GM12878 (cell line): ENCODE measurements at regions of chr17 and their contacts with region 1.

Region 1: GRCh38 chr17:73215447-73215846 is 22.6 kb downstream of the COG1 start:
- DNase-seq: no peak
- ATAC-seq: peak; percentile 79
- H3K4me3 ChIP-seq: no peak overlapping the region
- H3K27ac ChIP-seq: no peak overlapping the region
- H3K4me1 ChIP-seq: peaks cover 4% of the 10 kb centered on the region; the same call in 1 of the 2 replicates
- H3K27me3 ChIP-seq: no peaks in the 10 kb centered on the region
- CTCF ChIP-seq: peak in 2 of 3 experiments; percentile 0 to 30; a peak in 1 of 6 replicates
- EP300 ChIP-seq: no peak
- POLR2A ChIP-seq: no peak
- RAD21 ChIP-seq: no peak

Region 2: DNA sequence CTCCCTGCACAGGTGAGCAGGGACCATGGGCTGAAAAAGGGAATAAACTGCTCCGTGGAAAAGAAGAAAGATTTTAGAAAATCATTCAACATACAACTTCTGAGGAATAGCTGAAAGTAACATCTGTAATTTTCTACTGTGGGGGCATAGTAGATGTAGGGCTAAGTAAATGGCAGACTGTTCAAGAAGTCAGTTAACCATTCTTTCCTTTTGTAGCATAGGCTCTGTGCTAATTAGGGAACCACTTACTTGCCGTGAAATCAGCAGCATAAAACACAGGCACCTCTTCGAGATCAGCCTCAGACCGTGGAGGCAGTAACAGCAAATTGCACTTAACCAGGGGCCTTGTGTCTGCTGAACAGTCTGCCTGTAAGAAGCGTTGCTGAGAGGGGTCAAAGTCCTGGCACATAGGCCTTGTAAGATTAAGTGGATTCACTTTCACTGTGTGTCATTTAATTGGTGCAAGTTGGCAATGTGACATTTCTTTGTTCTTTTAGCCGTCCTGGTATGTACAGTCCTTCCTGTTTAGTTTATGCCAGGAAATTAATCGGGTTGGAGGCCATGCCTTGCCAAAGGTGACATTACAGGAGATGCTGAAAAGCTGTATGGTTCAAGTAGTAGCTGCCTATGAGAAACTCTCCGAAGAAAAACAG is 12.2 kb before region 1 on chr17:
- CTCF ChIA-PET with region 1: interaction called, 4 read pairs
- POLR2A ChIA-PET with region 1: interaction called, 3 read pairs
- RAD21 ChIA-PET with region 1: interaction called, 3 read pairs
- SMC1A ChIA-PET with region 1: interaction called, 10 read pairs
- in situ Hi-C with region 1: no loop called
- intact Hi-C with region 1: no loop called
- DNase-seq: no peak
- ATAC-seq: peak; percentile 91
- H3K4me3 ChIP-seq: no peak overlapping the region
- H3K27ac ChIP-seq: no peak overlapping the region
- H3K4me1 ChIP-seq: no peaks in the 10 kb centered on the region
- H3K27me3 ChIP-seq: no peaks in the 10 kb centered on the region
- CTCF ChIP-seq: no peak
- EP300 ChIP-seq: no peak
- POLR2A ChIP-seq: no peak
- RAD21 ChIP-seq: no peak

Region 3: DNA sequence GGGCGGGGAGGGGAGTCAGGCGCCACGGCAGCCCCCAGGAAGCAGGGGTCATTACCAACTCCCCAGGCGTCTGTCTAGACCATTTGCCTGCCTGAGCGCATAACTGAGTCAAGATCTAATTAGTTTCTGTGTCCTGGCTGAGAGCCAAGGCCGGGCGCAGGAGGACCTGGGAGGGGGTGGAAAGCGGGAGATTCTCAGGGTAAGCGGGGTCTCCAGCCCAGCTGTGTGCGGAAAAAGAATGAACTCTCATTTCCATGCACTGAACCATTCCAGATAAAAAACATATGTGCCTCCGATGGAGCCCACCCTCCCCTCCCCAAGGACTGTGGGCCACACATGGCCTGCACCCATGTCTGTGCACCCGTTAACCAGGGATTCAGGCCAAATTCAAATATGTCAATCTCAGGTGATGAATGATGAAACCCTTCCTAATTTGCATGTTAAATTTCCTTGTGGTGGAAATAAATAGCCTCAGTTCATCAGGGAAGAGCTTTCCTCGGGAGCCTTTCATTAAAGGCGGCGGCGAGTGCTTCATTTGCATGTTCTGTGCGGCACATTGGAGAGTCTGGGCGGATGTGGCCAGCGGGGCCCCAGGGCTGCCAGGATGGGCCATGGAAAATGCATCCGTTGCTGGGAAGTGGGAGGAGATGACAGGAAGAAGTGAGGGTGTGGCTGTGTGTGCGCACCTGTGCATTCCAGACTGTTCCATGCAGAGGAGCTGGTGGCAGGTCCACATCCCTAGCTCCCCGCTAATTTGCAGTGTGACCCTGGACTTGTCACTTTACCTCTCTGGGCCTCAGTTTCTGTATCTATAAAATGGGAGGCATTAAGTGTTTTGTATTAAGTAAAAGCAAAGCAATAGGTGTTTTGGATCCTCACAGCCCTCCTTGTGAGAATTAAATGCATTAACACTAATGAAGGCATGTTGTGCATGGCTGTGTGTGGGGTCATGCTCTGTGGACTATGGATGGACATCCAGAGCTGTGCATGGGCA is 277.7 kb after region 1 on chr17:
- CTCF ChIA-PET with region 1: no interaction called
- POLR2A ChIA-PET with region 1: no interaction called
- RAD21 ChIA-PET with region 1: no interaction called
- SMC1A ChIA-PET with region 1: no interaction called
- in situ Hi-C with region 1: no loop called
- intact Hi-C with region 1: no loop called
- DNase-seq: no peak
- ATAC-seq: no peak
- H3K4me3 ChIP-seq: no peak overlapping the region
- H3K27ac ChIP-seq: no peak overlapping the region
- H3K4me1 ChIP-seq: no peaks in the 10 kb centered on the region
- H3K27me3 ChIP-seq: peaks cover 0 to 3% of the 10 kb centered on the region in 2 experiments; a peak in 3 of 4 replicates
- CTCF ChIP-seq: no peak
- EP300 ChIP-seq: no peak
- POLR2A ChIP-seq: no peak
- RAD21 ChIP-seq: no peak